Activated CD4-positive, alpha-beta memory T cell treated with anti-CD3 and anti-CD28 coated beads for 36 hours (primary cell): ENCODE measurements at regions of chr4 and their contacts with region 1.

Region 1: GRCh38 chr4:164779811-164780216 is 25.9 kb downstream of the SMIM31 start:
- DNase-seq: peak; percentile 21
- H3K4me3 Mint-ChIP-seq: no peak overlapping the region
- H3K27ac Mint-ChIP-seq: no peak overlapping the region
- H3K4me1 Mint-ChIP-seq: no peaks in the 10 kb centered on the region
- H3K27me3 Mint-ChIP-seq: no peaks in the 10 kb centered on the region

Region 2: DNA sequence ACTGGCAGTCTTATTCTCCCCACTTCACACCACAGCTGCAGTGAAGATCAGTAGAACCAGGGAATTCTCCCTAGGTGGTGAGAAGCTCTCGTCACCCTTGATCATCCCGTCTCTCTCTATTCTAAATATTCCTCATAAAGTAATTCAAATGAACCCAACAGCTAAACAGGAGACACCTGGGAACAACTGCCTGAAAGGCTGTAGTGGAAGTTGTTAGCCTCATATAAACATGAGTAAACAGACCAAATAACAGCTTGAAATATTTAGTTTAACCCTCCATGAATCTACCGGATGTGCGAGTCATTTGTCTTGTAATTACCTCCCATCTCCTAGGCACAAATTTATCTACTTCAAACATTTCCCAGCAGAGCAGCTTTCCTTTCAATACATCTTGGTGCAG is 66.8 kb after region 1 on chr4:
- CTCF ChIA-PET with region 1: no interaction called
- POLR2A ChIA-PET with region 1: no interaction called
- intact Hi-C with region 1: no loop called
- DNase-seq: no peak
- H3K4me3 Mint-ChIP-seq: no peak overlapping the region
- H3K27ac Mint-ChIP-seq: no peak overlapping the region
- H3K4me1 Mint-ChIP-seq: no peaks in the 10 kb centered on the region
- H3K27me3 Mint-ChIP-seq: peaks cover 3% of the 10 kb centered on the region

Region 3: DNA sequence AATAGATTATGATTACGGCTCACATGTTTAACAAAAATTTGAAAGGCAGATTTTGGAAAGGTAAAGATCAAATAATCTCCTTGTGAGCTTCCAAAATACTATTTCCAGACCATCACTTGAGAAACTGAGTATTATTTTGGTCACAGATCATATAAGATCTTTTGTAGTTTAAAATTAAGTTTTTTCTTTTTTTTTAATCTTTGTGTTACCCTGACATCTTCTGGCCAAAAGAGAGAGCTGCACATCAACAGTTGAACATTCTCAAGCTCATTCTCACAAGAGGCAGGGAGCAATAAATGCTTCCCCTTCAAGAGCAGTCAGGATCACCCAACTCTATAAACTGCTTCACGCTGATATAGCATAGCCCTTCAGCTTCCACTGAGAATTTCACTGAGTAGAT is 317.0 kb after region 1 on chr4:
- CTCF ChIA-PET with region 1: no interaction called
- POLR2A ChIA-PET with region 1: no interaction called
- intact Hi-C with region 1: loop called (anchors 2 kb)
- DNase-seq: no peak
- H3K4me3 Mint-ChIP-seq: no peak overlapping the region
- H3K27ac Mint-ChIP-seq: no peak overlapping the region
- H3K4me1 Mint-ChIP-seq: no peaks in the 10 kb centered on the region
- H3K27me3 Mint-ChIP-seq: no peaks in the 10 kb centered on the region

Region 4: GRCh38 chr4:165464813-165465381 is 685.1 kb after region 1 on chr4:
- CTCF ChIA-PET with region 1: no interaction called
- POLR2A ChIA-PET with region 1: no interaction called
- intact Hi-C with region 1: loop called (anchors 10 kb)
- DNase-seq: no peak
- H3K4me3 Mint-ChIP-seq: no peak overlapping the region
- H3K27ac Mint-ChIP-seq: no peak overlapping the region
- H3K4me1 Mint-ChIP-seq: no peaks in the 10 kb centered on the region
- H3K27me3 Mint-ChIP-seq: peaks cover 3% of the 10 kb centered on the region